ENCODE measurements at regions of chr5 and their contacts with region 1.

Region 1: DNA sequence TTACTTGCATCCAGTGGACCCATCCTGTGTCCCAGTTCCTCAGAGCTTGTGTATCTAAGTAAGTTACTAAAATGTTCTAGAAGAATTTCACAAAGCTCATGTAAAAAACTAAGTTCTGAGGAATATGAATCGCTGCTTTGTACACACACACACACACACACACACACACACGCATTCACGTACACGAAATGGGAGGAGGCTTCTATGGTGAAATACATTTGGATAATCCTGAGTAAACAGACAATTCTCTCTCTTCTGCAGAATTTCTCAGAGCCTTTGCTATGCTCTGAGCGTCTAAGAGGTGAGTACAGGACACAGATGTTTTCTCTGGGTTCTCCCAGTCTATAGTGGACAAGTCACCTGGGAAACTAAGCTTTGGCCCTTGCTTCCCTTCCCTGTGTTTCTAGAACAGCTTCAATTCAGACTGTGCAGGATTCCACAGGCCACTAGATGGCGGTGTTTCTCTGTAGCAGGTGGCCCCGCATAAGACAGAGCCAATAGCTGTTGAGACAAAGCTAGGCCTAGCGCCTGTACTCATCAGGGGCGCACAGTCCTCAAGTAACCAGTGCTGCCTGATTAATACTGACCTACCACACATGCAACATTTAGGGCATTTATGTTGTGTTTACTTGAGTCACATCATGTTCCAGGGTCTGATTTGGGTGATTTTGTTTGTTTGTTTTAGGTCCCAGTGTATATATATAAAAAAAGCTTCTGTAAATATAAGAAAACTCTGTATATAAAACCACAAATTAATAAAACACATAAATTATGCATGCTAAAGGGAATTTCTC is 114.8 kb downstream of the LIFR start:
- DNase-seq: peak; percentile 79 to 96
- H3K4me3 ChIP-seq: no peak overlapping the region
- H3K27ac ChIP-seq: no peak overlapping the region
- H3K4me1 ChIP-seq: no peaks in the 10 kb centered on the region
- H3K27me3 ChIP-seq: peaks cover 10% of the 10 kb centered on the region
- CTCF ChIP-seq: peak; percentile 99

Region 2: DNA sequence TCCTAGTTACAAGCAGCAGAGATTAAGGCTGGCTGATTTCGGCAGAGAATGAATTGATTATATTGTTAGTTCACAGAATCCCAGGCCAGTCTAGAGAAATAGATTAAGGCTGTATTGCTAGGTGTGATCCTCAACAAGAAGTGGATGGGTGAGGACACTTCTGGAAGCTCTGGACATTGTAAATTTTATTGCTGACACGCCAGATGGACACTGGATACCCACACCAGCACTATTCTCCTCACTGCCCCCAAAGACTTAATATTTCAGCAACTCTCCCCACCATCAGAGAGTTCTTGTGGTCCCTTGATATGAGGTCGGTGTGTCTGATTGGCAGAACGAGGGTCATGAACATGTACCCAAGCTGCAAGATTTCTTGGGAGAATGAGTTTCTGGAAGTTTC is 354.9 kb before region 1 on chr5:
- CTCF ChIA-PET with region 1: interaction called, 10 read pairs
- POLR2A ChIA-PET with region 1: no interaction called
- intact Hi-C with region 1: no loop called
- DNase-seq: no peak
- H3K4me3 ChIP-seq: no peak overlapping the region
- H3K27ac ChIP-seq: no peak overlapping the region
- H3K4me1 ChIP-seq: no peaks in the 10 kb centered on the region
- H3K27me3 ChIP-seq: peaks cover 46% of the 10 kb centered on the region; the same call in 1 of the 2 replicates
- CTCF ChIP-seq: no peak

Region 3: GRCh38 chr5:38463634-38464521 is 22.2 kb after region 1 on chr5:
- CTCF ChIA-PET with region 1: interaction called, 17 read pairs
- POLR2A ChIA-PET with region 1: no interaction called
- intact Hi-C with region 1: no loop called
- DNase-seq: peak in 1 of 2 experiments; percentile 45
- H3K4me3 ChIP-seq: no peak overlapping the region
- H3K27ac ChIP-seq: no peak overlapping the region
- H3K4me1 ChIP-seq: peaks cover 14% of the 10 kb centered on the region
- H3K27me3 ChIP-seq: no peaks in the 10 kb centered on the region
- CTCF ChIP-seq: no peak

Region 4: GRCh38 chr5:38598994-38599611 is 157.5 kb after region 1 on chr5:
- CTCF ChIA-PET with region 1: interaction called, 13 read pairs
- POLR2A ChIA-PET with region 1: interaction called, 26 read pairs
- intact Hi-C with region 1: loop called (anchors 5 kb)
- DNase-seq: peak; percentile 60 to 80
- H3K4me3 ChIP-seq: no peak overlapping the region
- H3K27ac ChIP-seq: peak overlapping the region; percentile 38
- H3K4me1 ChIP-seq: peaks cover 76% of the 10 kb centered on the region
- H3K27me3 ChIP-seq: no peaks in the 10 kb centered on the region
- CTCF ChIP-seq: no peak

Region 5: GRCh38 chr5:38783011-38783561 is 341.4 kb after region 1 on chr5:
- CTCF ChIA-PET with region 1: interaction called, 15 read pairs
- POLR2A ChIA-PET with region 1: no interaction called
- intact Hi-C with region 1: no loop called
- DNase-seq: peak; percentile 45 to 85
- H3K4me3 ChIP-seq: no peak overlapping the region
- H3K27ac ChIP-seq: no peak overlapping the region
- H3K4me1 ChIP-seq: peaks cover 16% of the 10 kb centered on the region
- H3K27me3 ChIP-seq: no peaks in the 10 kb centered on the region
- CTCF ChIP-seq: no peak

Region 6: GRCh38 chr5:38922199-38922598 is 480.5 kb after region 1 on chr5:
- CTCF ChIA-PET with region 1: interaction called, 30 read pairs
- POLR2A ChIA-PET with region 1: no interaction called
- intact Hi-C with region 1: loop called (anchors 1 kb)
- DNase-seq: peak; percentile 62 to 75
- H3K4me3 ChIP-seq: no peak overlapping the region
- H3K27ac ChIP-seq: no peak overlapping the region
- H3K4me1 ChIP-seq: no peaks in the 10 kb centered on the region
- H3K27me3 ChIP-seq: no peaks in the 10 kb centered on the region
- CTCF ChIP-seq: peak; percentile 98